PC-3 (cell line): ENCODE measurements at regions of chr11 and their contacts with region 1.

Region 1: GRCh38 chr11:96342961-96343711 is at the start of gene MAML2:
- DNase-seq: peak; percentile 98
- ATAC-seq: peak; percentile 87
- H3K4me3 ChIP-seq: peak within 1 kb of the TSS; percentile 89
- H3K27ac ChIP-seq: peak within 1 kb of the TSS; percentile 69
- H3K4me1 ChIP-seq: peaks cover 36% of the 10 kb centered on the region
- H3K27me3 ChIP-seq: no peaks in the 10 kb centered on the region
- CTCF ChIP-seq: peak; percentile 79
- total RNA-seq, gene MAML2: 10.3 and 10.9 TPM in 2 replicates

Region 2: DNA sequence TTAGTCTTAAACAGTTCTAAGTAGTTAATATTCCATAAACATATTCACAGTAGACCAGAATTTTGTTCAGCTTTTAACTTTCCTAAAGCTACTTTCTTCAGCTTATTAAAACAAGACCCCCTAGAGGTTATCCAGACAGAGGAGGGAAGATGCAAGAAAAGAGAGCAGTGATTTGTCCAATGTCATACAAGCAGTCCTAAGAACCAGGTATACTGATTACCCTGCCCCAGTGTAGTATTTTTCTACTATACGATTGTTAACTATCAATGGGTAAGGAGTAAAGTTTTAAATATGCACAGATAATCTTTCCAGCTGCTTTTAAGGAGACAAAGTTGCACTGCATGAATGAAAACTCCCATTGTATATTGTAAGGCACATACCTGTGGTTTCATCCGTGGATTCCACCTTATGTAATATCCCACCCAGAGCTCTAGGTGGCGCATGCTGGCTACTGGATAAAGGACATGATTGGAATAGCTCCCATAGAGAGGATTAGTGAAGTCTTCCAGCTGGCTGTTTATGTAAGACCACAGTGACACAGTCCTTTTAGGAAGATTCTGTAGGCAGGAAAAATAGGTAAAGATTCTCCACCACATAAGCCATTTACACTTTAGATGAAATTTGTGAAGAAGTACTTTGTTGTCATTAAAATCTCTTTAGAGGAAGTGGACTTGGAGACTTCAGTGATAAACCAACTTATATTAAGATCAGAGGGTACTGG is 507.2 kb before region 1 on chr11:
- CTCF ChIA-PET with region 1: interaction called, 15 read pairs
- POLR2A ChIA-PET with region 1: no interaction called
- intact Hi-C with region 1: loop called (anchors 1 kb)
- DNase-seq: peak; percentile 94
- ATAC-seq: peak; percentile 61
- H3K4me3 ChIP-seq: no peak overlapping the region
- H3K27ac ChIP-seq: no peak overlapping the region
- H3K4me1 ChIP-seq: peaks cover 38% of the 10 kb centered on the region
- H3K27me3 ChIP-seq: no peaks in the 10 kb centered on the region
- CTCF ChIP-seq: peak; percentile 99

Region 3: GRCh38 chr11:95977534-95978174 is 365.5 kb before region 1 on chr11:
- CTCF ChIA-PET with region 1: no interaction called
- POLR2A ChIA-PET with region 1: no interaction called
- intact Hi-C with region 1: loop called (anchors 2 kb)
- DNase-seq: peak; percentile 98
- ATAC-seq: peak; percentile 97
- H3K4me3 ChIP-seq: peak overlapping the region; percentile 17; the same call in 1 of the 2 replicates
- H3K27ac ChIP-seq: peak overlapping the region; percentile 76
- H3K4me1 ChIP-seq: peaks cover 27% of the 10 kb centered on the region
- H3K27me3 ChIP-seq: no peaks in the 10 kb centered on the region
- CTCF ChIP-seq: no peak

Region 4: DNA sequence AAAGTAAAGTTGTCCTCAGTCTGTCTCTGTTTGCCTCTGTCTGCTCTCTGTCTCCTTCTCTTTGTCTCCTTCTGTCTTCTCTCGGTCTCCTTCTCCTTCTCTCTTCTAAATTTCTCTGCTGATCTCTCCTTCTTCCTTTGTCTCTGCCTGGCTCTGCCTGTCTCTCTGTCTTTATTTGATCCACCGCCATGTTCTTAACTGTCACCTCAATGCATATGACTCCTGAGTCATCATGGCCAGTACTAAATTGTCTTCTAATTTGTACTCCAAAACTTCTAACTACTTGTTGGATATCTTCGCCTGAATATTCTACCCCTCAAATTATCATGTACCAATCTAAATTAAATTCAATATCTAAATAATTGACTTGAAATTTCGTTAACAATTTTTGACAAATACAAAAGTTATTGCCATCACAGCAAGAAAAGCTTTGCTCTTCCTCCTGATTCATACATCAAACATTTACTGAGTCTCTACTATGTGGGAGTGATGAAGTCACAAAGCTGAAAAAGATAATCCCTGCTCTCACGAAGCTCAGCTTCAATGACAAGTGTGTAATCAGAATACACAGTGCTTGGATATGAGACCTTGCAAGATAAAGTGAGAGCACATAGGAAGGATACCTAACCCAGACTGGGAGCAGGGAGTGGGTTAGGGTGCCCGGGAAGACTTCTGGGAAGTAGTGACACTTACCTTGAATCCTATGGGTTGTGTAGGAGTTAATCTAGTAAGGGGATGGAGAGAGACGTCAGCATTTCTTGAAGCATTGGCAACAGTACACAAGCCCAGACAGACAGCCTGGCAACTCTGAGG is 193.2 kb before region 1 on chr11:
- CTCF ChIA-PET with region 1: interaction called, 5 read pairs
- POLR2A ChIA-PET with region 1: interaction called, 3 read pairs
- intact Hi-C with region 1: loop called (anchors 5 kb)
- DNase-seq: peak; percentile 77
- ATAC-seq: peak; percentile 47
- H3K4me3 ChIP-seq: no peak overlapping the region
- H3K27ac ChIP-seq: peak overlapping the region; percentile 88
- H3K4me1 ChIP-seq: peaks cover 52% of the 10 kb centered on the region
- H3K27me3 ChIP-seq: no peaks in the 10 kb centered on the region
- CTCF ChIP-seq: no peak

Region 5: DNA sequence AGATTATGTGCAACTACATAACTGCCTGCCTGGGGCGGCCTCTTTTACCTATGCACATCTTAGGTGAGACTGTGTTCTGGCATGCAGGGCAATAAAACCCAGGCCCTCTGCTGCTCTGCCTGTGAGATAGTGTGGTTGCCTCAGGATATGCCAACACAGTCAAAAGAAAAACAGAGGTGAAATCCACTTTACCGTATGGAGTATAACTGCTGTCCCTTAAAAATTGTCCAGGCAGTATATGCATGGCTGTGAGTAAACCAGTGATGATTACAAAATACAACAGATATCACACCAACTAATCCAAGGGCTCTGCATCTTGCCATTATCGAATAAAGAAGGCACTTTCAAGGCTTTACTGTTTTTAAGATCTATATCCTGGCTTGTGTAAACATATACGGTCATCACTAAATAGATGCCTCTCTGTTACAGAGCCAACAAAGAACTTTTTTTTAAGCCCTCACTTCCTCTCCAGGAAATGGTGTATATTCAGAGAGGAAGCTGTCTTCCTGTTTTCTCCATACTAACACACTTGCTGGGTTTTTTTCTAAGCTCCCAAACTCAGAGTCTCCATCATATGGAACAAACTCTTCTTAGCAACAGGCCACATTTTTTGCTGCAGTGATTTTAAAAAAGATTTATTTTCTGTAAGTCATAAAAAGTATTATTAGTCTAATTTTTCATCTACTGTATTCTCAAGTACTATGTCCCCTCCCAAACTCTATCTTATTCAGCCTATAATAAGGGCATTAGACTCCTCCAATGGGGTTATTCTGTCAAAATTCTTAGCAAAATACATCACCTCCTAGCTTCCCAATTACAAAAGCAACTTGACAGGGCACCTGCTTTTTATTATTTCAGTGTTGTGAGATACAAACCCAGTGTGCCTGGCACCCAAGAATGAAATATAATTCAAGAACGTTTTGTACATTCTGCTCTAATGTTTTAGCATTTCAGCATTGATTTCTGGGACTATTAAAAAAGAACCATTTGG is 135.4 kb before region 1 on chr11:
- CTCF ChIA-PET with region 1: interaction called, 5 read pairs
- POLR2A ChIA-PET with region 1: no interaction called
- intact Hi-C with region 1: loop called (anchors 2 kb)
- DNase-seq: peak; percentile 92
- ATAC-seq: peak; percentile 92
- H3K4me3 ChIP-seq: peak overlapping the region; percentile 37
- H3K27ac ChIP-seq: peak overlapping the region; percentile 85
- H3K4me1 ChIP-seq: peaks cover 36% of the 10 kb centered on the region
- H3K27me3 ChIP-seq: no peaks in the 10 kb centered on the region
- CTCF ChIP-seq: no peak

Region 6: DNA sequence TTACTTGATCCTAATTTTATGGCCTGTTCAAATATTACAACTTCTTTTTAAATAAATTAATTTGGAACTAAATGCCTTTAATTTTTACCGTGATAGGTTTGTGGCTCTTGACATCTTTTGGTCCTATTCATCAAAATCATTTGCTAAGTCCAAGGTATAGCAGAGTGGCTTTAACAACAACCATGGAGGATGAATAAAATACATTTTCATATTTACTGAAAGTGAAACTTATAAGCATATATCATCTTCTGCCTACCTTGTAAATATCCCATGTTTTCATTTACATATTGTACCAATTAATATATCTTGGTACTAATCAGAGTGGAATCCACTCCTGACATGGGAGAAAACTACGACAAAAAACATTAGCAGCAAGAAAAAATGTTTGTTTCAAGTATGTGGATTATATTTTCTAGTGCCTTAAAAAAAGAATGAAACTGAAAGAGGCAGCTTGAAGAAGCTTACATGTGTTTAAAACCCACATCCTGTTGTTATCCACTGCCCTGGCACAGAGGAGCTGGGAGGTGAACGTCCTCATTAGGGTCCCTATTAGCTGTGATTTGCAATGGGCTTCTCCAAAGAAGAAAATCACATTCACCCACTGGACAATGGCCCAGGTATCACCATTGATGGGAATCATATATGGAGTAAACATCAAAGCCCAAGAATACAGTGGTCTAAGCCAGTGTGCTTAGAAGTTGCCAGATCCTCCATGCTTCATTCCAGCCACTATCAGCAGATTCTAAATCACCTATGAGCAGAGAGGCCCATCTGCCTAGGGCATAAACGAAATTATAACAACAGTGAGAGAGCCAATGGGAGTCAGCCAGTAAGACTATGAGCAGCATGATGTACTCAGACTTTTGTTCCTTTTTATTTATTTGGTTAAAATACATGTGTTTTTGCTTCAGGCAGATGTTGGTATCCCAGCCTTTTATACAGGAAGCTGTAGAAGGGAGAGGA is 84.9 kb before region 1 on chr11:
- CTCF ChIA-PET with region 1: interaction called, 3 read pairs
- POLR2A ChIA-PET with region 1: interaction called, 6 read pairs
- intact Hi-C with region 1: loop called (anchors 5 kb)
- DNase-seq: no peak
- ATAC-seq: no peak
- H3K4me3 ChIP-seq: no peak overlapping the region
- H3K27ac ChIP-seq: peak overlapping the region; percentile 81
- H3K4me1 ChIP-seq: peaks cover 51% of the 10 kb centered on the region
- H3K27me3 ChIP-seq: no peaks in the 10 kb centered on the region
- CTCF ChIP-seq: no peak

Region 7: DNA sequence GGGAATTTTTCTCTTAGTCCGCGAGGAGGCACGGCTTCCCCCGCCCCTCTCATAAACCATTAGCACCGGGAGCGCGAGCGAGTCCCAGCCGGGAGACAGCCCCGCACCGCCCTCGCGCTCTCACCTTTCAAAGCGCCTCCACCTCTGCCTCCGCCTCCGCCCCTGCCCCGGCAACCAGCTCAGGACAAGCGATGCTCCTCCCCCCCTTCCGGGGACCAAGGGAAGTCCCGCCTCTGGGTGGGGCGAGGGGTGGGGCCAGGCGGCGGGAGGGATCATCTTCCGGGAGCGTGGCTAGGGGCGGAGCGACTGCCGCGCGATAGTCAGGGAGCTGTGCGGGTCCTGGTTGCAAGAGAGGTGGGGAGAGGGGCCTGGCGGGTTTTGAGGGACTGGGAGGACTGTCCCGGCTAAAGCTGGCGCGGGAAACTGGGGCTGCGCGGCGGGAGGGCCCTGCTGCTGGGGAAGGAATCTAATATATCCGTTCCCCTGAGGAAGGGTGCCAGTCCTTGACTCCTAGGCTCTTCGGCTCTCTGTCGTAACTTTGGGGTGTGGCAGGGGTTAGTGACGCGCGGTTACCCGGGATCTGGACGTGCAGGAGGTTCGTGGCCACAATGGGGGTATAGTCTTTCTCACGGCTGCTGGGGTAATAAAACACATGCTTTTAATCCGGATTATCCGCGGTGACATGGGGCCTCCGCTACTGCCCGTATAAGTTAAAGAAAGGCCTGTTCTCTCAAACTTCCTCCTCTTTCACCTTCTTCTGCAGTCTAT is 46.8 kb after region 1 on chr11 and contains the starts of genes CCDC82 and JRKL:
- CTCF ChIA-PET with region 1: interaction called, 8 read pairs
- POLR2A ChIA-PET with region 1: interaction called, 9 read pairs
- intact Hi-C with region 1: loop called (anchors 1 kb)
- DNase-seq: peak; percentile 99
- ATAC-seq: peak; percentile 91
- H3K4me3 ChIP-seq: peak within 1 kb of the TSS; percentile 89
- H3K27ac ChIP-seq: peak within 1 kb of the TSS; percentile 56
- H3K4me1 ChIP-seq: peaks cover 45% of the 10 kb centered on the region
- H3K27me3 ChIP-seq: no peaks in the 10 kb centered on the region
- CTCF ChIP-seq: no peak
- total RNA-seq, gene CCDC82: 13.5 and 14.5 TPM in 2 replicates
- total RNA-seq, gene JRKL: 4.7 and 5.1 TPM in 2 replicates

Region 8: GRCh38 chr11:96798445-96798844 is 455.3 kb after region 1 on chr11:
- CTCF ChIA-PET with region 1: no interaction called
- POLR2A ChIA-PET with region 1: no interaction called
- intact Hi-C with region 1: no loop called
- DNase-seq: no peak
- ATAC-seq: no peak
- H3K4me3 ChIP-seq: no peak overlapping the region
- H3K27ac ChIP-seq: no peak overlapping the region
- H3K4me1 ChIP-seq: no peaks in the 10 kb centered on the region
- H3K27me3 ChIP-seq: peaks cover 36% of the 10 kb centered on the region
- CTCF ChIP-seq: no peak